Activated CD4-positive, alpha-beta memory T cell treated with anti-CD3 and anti-CD28 coated beads, Interleukin-2, amount 10 ng/mL, durations not matched to agents 7 days and 5 days (primary cell): ENCODE measurements at regions of chr16 and their contacts with region 1.

Region 1: GRCh38 chr16:31873556-31874365 is at the start of gene ZNF267:
- DNase-seq: peak; percentile 95
- H3K4me3 Mint-ChIP-seq: peak within 1 kb of the TSS; percentile 87
- H3K27ac Mint-ChIP-seq: peak within 1 kb of the TSS; percentile 97
- H3K4me1 Mint-ChIP-seq: peaks cover 76% of the 10 kb centered on the region
- H3K27me3 Mint-ChIP-seq: no peaks in the 10 kb centered on the region
- total RNA-seq, gene ZNF267: 86.2 to 88.3 TPM

Region 2: GRCh38 chr16:31700526-31701388 is 173.0 kb before region 1 on chr16:
- CTCF ChIA-PET with region 1: interaction called, 3 read pairs
- POLR2A ChIA-PET with region 1: interaction called, 12 read pairs
- DNase-seq: peak; percentile 77
- H3K4me3 Mint-ChIP-seq: peak overlapping the region; percentile 76
- H3K27ac Mint-ChIP-seq: peak overlapping the region; percentile 73
- H3K4me1 Mint-ChIP-seq: peaks cover 31% of the 10 kb centered on the region
- H3K27me3 Mint-ChIP-seq: peaks cover 2% of the 10 kb centered on the region

Region 3: DNA sequence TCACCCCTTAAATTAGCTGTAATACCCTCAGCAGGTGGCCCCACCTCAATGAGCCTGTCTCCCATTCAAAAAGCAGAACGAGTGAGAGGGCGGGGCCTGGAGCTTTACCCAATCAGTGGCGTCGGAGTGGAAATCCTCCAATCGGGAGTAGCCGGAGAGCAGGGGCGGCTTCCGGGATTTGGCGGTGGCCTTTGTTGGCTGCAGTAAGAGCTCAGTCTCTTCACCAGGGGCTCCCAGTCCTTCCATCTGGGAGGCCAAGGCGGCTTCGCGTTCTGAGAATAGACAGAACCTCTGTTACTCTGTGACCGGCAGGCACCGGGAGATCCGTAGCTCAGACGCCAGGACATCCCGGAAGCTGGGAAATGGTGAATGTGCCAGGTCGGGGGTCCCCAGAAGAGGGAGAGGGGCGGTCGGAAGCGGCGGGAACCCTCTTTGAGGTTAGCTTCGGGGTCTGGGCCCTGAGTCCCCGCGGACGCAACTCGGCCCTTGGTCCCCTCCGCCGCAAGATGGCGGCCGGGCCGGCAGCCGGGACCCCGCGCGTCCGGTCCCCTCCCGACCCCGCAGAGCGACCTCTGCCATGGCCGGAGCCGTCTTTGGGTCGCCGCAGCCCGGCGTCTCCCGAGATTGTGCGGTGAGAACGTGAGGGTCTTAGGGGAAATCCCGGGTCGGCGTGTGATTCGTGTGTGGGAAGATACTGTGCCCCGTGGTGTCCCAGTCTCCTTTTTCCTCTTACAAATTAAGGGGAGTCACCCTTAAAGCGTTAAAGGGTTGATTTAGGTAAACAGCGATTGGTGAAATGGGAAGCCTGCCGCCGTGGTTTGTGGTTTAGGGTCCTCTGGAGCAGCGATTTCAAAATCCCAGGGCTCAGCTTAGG is 160.5 kb before region 1 on chr16:
- CTCF ChIA-PET with region 1: interaction called, 9 read pairs
- POLR2A ChIA-PET with region 1: interaction called, 34 read pairs
- DNase-seq: peak; percentile 93
- H3K4me3 Mint-ChIP-seq: peak overlapping the region; percentile 97
- H3K27ac Mint-ChIP-seq: peak overlapping the region; percentile 96
- H3K4me1 Mint-ChIP-seq: peaks cover 36% of the 10 kb centered on the region
- H3K27me3 Mint-ChIP-seq: no peaks in the 10 kb centered on the region

Region 4: DNA sequence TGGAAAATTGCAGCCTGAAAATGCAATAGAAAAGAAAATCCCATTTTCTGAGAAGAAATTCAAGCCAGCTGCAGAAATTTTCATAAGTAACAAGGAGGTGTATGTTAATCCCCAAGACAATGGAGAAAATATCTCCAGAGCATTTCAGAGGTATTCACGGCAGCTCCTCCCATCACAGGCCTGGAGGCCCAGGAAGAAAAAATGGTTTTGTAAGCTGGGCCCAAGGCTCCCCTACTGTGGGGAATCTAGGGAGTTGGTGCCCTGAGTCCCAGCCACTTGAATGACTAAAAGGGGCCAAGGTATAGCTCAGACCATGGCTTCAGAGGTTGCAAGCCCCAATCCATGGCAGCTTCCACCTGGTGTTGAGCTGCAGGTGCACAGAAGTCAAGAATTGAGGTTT is 93.4 kb before region 1 on chr16:
- CTCF ChIA-PET with region 1: no interaction called
- POLR2A ChIA-PET with region 1: no interaction called
- DNase-seq: no peak
- H3K4me3 Mint-ChIP-seq: no peak overlapping the region
- H3K27ac Mint-ChIP-seq: no peak overlapping the region
- H3K4me1 Mint-ChIP-seq: no peaks in the 10 kb centered on the region
- H3K27me3 Mint-ChIP-seq: no peaks in the 10 kb centered on the region

Region 5: DNA sequence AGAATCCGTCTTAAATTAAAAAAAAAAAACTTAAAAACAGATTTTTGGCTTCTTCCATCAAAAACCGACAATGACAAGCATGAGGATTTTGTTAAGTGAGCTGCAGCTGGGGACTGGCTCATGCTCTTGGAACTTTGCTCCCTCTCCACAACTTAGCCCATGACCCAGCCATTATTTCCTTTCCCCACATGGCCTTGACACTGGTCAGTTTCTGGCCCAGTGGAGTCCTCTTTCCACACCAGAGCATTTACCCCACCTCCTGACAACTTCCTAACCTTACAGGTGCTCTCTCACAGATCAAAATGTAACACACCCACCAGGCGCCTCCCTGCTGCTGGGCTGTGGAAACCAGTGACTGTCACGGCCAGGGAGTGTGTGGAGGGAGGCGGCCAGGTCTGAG is 62.9 kb before region 1 on chr16:
- CTCF ChIA-PET with region 1: no interaction called
- POLR2A ChIA-PET with region 1: no interaction called
- DNase-seq: no peak
- H3K4me3 Mint-ChIP-seq: no peak overlapping the region
- H3K27ac Mint-ChIP-seq: no peak overlapping the region
- H3K4me1 Mint-ChIP-seq: no peaks in the 10 kb centered on the region
- H3K27me3 Mint-ChIP-seq: peaks cover 1% of the 10 kb centered on the region

Region 6: DNA sequence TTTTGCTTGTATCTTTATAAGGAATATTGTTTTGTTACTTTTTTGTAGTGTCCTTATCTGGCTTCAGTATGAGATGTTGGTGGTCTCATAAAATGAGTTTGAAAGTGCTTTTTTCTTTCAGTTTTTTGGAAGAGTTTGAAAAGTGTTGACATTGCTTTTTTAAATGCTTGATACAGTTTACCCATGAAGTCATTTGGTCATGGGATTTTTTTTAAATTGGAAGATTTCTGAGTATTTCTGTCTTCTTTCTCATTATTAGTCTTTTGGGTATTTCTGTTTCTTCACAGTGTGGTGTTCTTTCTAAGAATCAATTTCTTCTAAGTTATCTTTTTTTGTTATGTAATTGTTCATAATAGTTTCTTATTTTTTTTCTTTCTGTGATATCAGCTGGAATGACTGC is 15.0 kb after region 1 on chr16:
- CTCF ChIA-PET with region 1: no interaction called
- POLR2A ChIA-PET with region 1: interaction called, 18 read pairs
- DNase-seq: no peak
- H3K4me3 Mint-ChIP-seq: no peak overlapping the region
- H3K27ac Mint-ChIP-seq: peak overlapping the region; percentile 36
- H3K4me1 Mint-ChIP-seq: peaks cover 55% of the 10 kb centered on the region
- H3K27me3 Mint-ChIP-seq: no peaks in the 10 kb centered on the region